Left lung (tissue), 14 donors: ENCODE measurements at regions of chr20 and their contacts with region 1.

Region 1: DNA sequence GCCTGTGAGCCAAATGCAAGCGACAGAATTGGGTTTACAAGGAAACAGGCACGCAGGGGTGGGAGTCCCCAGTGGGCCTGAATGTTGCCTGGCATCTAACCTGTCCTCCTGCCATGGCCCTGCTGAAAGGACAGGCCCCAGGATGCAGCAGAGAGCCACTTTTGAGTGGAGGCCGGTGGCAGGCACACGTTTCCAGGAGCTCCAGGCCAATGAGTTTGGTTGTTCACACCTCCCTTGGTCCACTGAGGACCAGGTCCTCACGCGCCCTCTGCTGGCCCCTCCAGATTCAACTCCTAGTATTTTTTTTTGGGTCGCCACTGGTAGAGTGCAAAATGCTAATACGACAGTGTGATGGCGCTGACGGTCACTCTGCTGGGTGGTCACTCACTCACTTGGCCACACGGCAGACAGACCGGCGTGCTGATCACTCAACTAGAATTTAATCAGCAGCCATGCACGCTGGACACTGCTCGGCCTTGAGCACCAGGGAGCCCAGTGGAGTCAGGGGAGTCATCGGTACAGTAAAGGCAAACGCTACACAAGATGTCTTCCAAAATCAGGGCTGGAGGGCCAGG is 81.7 kb upstream of the NFATC2 start:
- DNase-seq: peak; percentile 39 to 80 (median 52)
- ATAC-seq: peak; percentile 80
- H3K4me3 ChIP-seq: no peak overlapping the region
- H3K27ac ChIP-seq: no peak overlapping the region
- H3K4me1 ChIP-seq: no peaks in the 10 kb centered on the region
- H3K27me3 ChIP-seq: no peaks in the 10 kb centered on the region
- CTCF ChIP-seq: peak; percentile 35 to 56

Region 2: GRCh38 chr20:51372176-51372803 is 252.0 kb before region 1 on chr20:
- intact Hi-C with region 1: loop called in 1 of 2 experiments (anchors 10 kb)
- DNase-seq: peak in 3 of 4 donors; percentile 49 to 67 (median 59)
- ATAC-seq: peak; percentile 94
- H3K4me3 ChIP-seq: no peak overlapping the region
- H3K27ac ChIP-seq: no peak overlapping the region
- H3K4me1 ChIP-seq: no peaks in the 10 kb centered on the region
- H3K27me3 ChIP-seq: no peaks in the 10 kb centered on the region
- CTCF ChIP-seq: peak; percentile 61 to 72

Region 3: DNA sequence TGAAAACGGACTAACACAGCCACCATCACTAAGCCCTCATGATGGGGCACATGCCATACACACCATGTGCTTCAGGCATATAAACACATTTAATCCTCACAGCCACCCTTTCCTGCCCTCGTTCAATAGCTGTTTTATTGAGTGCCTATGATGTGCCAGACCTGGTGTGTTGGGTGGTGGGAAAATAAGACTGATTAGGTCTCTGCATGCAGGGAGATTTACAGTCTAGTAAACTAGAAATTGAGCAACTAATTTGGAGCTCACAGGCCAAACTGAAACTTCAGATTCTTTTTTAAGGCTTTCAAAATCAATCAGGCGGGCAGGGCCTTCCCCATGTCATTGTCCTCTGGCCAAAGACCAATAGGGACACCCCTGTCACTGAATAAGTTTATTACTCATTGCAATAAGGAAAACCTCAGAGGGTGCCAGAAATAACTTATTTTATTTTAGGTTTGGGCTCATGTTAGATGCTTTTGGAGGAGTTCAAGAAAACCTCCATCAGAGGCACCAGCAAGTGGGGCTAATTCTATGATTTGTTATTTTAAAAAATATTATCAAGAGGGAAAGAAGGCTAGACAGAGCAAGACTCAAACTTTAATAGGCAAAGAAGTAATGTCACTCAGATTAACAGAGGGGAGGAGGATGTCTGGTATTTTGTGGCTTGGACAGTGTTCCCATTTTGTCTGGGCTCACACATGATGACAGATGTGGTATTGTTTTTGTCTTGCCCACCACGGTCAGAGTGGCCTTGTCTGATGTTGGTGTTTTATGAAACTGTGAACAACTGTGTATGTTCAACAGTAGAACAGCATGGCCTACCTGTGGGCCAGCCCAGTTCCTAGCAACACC is 555.3 kb after region 1 on chr20:
- intact Hi-C with region 1: no loop called
- DNase-seq: no peak
- ATAC-seq: no peak
- H3K4me3 ChIP-seq: no peak overlapping the region
- H3K27ac ChIP-seq: no peak overlapping the region
- H3K4me1 ChIP-seq: no peaks in the 10 kb centered on the region
- H3K27me3 ChIP-seq: no peaks in the 10 kb centered on the region
- CTCF ChIP-seq: no peak